ENCODE measurements at regions of chr17 and their contacts with region 1.

Region 1: GRCh38 chr17:7844292-7845154 is 10.3 kb upstream of the TMEM88 start:
- DNase-seq: peak; percentile 96

Region 2: GRCh38 chr17:7403977-7404736 is 440.4 kb before region 1 on chr17 and contains the start of gene TMEM256:
- intact Hi-C with region 1: loop called (anchors 5 kb)
- DNase-seq: peak; percentile 99
- total RNA-seq, gene TMEM256: 67.7 TPM

Region 3: GRCh38 chr17:7856883-7857723 is 12.6 kb after region 1 on chr17 and contains the start of gene NAA38:
- intact Hi-C with region 1: loop called (anchors 2 kb)
- DNase-seq: peak; percentile 96
- total RNA-seq, gene NAA38: 68.8 TPM

Region 4: GRCh38 chr17:7887482-7888183 is 43.1 kb after region 1 on chr17:
- intact Hi-C with region 1: loop called (anchors 5 kb)
- DNase-seq: peak; percentile 95

Region 5: DNA sequence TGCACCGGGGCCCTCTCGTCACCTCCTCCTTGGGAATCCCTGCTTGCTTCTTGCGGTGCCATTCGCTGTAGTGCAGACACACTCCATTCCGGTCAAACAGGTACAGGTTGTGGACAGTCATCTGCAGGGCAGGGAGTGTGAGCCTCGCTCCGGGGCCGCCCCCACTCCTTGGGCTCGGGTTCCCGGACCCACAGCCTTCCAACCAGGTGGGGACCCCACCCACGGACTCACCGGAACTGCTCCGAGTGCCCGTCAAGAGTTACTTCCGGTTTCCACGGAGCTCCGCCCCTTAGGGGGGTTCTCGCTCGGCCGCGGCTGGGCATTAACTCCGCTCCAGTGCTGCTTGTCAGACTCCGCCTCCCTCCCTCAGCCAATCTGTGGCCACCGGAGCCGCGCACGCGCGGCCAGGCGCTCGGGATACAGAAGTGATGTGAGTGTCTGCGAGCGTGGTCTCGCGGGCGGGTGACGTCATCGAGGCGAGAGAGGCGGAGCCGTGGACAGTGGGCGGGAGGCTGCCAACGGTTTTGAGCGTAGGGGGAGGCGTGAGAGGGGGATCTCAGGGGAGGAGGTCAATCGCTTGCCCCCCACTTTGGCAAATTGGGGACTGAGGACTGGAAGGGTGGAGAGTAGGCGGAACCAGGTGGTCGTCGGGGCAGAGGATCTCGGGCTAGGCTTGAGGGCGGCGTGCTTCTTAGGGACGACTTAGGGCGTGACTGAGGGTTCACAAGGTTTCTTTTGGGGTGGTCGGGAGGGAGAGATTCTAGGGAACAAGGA is 87.4 kb after region 1 on chr17 and contains the starts of genes CNTROB and TRAPPC1:
- intact Hi-C with region 1: no loop called
- DNase-seq: peak; percentile 100
- total RNA-seq, gene CNTROB: 12.0 TPM
- total RNA-seq, gene TRAPPC1: 114 TPM

Region 6: DNA sequence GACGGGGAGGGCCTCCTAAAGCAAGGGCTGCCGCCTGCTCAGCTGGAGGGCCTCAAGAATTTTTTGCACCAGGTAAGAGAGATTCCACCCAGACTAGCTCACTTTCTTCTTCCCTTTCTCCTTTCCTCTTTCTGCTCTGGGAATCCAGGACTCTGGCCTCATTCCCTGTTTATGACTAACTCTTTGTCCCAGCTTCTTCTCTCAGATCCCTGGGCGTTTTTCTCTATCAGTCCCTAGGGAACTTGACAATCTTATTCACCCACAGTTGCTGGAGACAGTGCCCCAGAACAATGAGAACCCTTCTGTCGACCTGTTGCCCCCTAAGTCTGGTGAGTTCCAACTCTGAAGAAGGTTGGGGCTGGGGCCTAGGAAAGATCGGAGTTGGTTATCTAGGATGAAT is 103.1 kb after region 1 on chr17:
- intact Hi-C with region 1: no loop called
- DNase-seq: no peak

Region 7: GRCh38 chr17:8156246-8156992 is 311.9 kb after region 1 on chr17:
- intact Hi-C with region 1: loop called (anchors 2 kb)
- DNase-seq: peak; percentile 100